GM10248 (cell line): ENCODE measurements at regions of chr16 and their contacts with region 1.

Region 1: GRCh38 chr16:53755536-53755910 is 51.6 kb downstream of the FTO start:
- DNase-seq: no peak
- CTCF ChIP-seq: no peak

Region 2: DNA sequence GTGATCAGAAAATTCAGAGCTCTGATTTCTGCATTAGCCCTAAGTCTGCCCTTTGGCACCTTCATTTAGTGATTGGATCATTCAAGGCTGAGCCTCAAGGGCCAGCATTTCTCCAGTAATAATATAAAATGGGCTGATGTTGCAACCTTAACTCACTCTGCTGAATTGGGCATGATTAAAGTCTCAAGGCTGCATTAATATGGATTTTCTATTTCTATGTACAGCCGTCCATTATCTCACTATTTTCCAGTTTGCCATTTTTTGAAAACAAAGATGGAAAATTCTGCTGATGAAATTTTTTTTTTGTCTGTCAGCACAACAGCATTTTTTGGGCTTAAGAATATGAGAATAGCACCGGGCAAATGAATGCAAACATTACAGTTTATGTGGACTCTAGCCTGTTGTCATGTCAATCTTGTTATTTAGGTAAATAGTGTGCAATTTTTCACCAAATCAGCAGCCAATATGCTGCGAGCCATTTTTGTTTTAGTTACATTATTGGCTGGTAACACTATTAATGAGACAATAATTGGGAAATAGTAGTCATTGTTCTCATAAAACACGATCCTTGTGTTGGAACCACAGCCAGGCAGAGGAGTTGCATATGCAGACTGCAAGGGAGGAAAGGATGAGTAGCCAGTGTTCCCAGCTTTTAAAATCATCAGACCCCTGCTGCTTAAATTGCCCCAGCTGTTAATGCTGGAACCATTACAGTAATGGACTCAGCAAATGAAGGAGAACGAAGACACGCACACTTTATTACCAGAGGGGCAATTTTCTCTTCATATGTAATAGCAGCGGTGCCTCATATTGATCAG is 41.1 kb before region 1 on chr16:
- CTCF ChIA-PET with region 1: no interaction called
- POLR2A ChIA-PET with region 1: no interaction called
- DNase-seq: no peak
- CTCF ChIP-seq: no peak

Region 3: DNA sequence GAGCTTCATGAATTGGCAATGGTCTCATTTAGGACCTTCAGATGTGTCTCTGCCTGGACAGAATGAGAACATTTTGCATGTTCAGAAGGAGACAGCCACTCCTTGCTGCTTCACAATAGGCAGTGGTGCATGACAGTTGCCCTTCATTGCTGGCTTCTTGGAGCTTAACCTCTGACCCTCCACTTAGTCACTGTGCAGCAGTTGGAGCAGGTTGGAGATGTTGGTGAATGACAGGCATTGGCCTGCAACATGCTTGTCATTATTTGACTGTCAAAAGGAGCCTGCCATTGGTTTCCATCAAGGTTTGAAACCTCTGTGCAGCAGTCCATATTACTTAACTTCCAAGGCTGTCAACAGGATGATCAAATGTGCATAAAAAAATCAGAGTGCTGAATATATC is 28.9 kb before region 1 on chr16:
- CTCF ChIA-PET with region 1: no interaction called
- POLR2A ChIA-PET with region 1: no interaction called
- DNase-seq: no peak
- CTCF ChIP-seq: no peak

Region 4: GRCh38 chr16:53773150-53773846 is 17.8 kb after region 1 on chr16:
- CTCF ChIA-PET with region 1: interaction called, 12 read pairs
- POLR2A ChIA-PET with region 1: no interaction called
- DNase-seq: peak; percentile 29
- CTCF ChIP-seq: peak; percentile 63